ENCODE measurements at regions of chr4 and their contacts with region 1.

Region 1: DNA sequence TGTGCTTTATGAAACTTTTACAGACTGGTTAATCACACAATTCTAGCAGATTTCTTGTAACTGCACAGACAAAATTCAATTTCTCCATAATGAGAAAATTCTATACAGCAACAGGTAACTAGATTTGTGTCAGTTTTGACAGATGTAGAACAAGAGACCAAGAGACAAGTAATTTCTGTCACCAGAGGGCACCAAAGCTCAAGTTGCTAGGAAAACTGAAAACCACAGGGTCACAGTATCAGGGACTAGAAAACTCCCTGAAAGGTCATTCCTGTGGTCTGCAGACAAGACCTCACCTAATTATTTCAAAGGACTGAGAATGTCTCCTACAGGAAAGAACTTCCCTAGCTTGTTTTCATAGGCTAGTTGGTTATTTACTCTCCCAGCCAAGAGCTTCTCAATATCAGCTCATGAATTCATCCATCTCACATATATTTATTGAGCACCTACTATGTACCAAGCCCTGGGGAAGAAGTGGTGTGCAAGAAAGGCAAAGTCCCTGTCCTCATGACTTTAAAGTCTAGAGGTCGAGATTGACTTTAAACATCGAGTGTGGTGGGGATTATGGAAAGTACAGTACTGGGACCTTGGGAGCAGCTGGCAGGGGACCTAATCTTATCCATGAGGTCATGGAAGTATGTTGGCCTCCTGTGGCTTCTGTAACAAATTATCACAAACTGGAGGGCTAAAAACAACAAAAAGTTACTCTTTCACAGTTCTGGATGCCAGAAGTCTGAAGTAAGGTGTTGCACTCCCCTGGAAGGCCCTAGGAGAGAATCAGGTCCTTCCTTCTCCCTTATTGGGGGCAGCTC is 47.8 kb upstream of the SETD7 start:
- DNase-seq: peak; percentile 55
- H3K4me3 ChIP-seq: no peak overlapping the region
- H3K27ac ChIP-seq: no peak overlapping the region
- H3K4me1 ChIP-seq: no peaks in the 10 kb centered on the region
- H3K27me3 ChIP-seq: no peaks in the 10 kb centered on the region
- CTCF ChIP-seq: peak; percentile 62 to 73

Region 2: DNA sequence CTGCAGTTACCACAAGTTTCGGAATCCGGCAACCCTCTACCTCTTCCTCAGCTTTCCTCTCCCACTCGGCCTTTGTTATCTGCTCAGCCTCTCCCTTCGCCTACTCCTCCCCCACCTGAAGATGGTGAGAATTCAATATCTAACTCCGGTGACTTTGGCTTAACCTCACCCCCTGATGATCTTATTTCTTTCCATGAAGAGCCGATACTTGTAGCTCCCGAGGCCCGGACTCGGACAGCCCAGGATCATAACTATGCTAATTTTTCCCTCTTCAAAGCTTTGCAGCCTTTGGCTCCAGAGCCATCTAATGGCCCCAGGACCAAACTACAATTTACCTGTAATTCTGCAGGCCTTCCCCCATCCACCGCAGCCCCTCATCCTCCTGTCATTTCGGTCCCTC is 29.9 kb after region 1 on chr4:
- CTCF ChIA-PET with region 1: no interaction called
- dilution Hi-C with region 1: no loop called
- in situ Hi-C with region 1: no loop called
- intact Hi-C with region 1: loop called (anchors 1 kb)
- DNase-seq: no peak
- H3K4me3 ChIP-seq: no peak overlapping the region
- H3K27ac ChIP-seq: no peak overlapping the region
- H3K4me1 ChIP-seq: no peaks in the 10 kb centered on the region
- H3K27me3 ChIP-seq: no peaks in the 10 kb centered on the region
- CTCF ChIP-seq: peak; percentile 23 to 51

Region 3: GRCh38 chr4:139682309-139682708 is 78.5 kb after region 1 on chr4:
- CTCF ChIA-PET with region 1: no interaction called
- dilution Hi-C with region 1: no loop called
- in situ Hi-C with region 1: no loop called
- intact Hi-C with region 1: no loop called
- DNase-seq: no peak
- H3K4me3 ChIP-seq: no peak overlapping the region
- H3K27ac ChIP-seq: no peak overlapping the region
- H3K4me1 ChIP-seq: peaks cover 12% of the 10 kb centered on the region
- H3K27me3 ChIP-seq: no peaks in the 10 kb centered on the region
- CTCF ChIP-seq: no peak

Region 4: GRCh38 chr4:139692309-139693012 is 88.7 kb after region 1 on chr4:
- CTCF ChIA-PET with region 1: no interaction called
- dilution Hi-C with region 1: no loop called
- in situ Hi-C with region 1: no loop called
- intact Hi-C with region 1: no loop called
- DNase-seq: no peak
- H3K4me3 ChIP-seq: no peak overlapping the region
- H3K27ac ChIP-seq: no peak overlapping the region
- H3K4me1 ChIP-seq: no peaks in the 10 kb centered on the region
- H3K27me3 ChIP-seq: no peaks in the 10 kb centered on the region
- CTCF ChIP-seq: peak in 1 of 2 donors; percentile 20

Region 5: GRCh38 chr4:139740531-139741041 is 136.8 kb after region 1 on chr4:
- CTCF ChIA-PET with region 1: no interaction called
- dilution Hi-C with region 1: no loop called
- in situ Hi-C with region 1: no loop called
- intact Hi-C with region 1: loop called (anchors 10 kb)
- DNase-seq: peak; percentile 59
- H3K4me3 ChIP-seq: no peak overlapping the region
- H3K27ac ChIP-seq: no peak overlapping the region
- H3K4me1 ChIP-seq: no peaks in the 10 kb centered on the region
- H3K27me3 ChIP-seq: peaks cover 7% of the 10 kb centered on the region
- CTCF ChIP-seq: peak in 1 of 2 donors; percentile 54

Measured in mammary epithelial cell (primary cell).